Cardiac septum (tissue), 1 donor: ENCODE measurements at regions of chr11 and their contacts with region 1.

Region 1: DNA sequence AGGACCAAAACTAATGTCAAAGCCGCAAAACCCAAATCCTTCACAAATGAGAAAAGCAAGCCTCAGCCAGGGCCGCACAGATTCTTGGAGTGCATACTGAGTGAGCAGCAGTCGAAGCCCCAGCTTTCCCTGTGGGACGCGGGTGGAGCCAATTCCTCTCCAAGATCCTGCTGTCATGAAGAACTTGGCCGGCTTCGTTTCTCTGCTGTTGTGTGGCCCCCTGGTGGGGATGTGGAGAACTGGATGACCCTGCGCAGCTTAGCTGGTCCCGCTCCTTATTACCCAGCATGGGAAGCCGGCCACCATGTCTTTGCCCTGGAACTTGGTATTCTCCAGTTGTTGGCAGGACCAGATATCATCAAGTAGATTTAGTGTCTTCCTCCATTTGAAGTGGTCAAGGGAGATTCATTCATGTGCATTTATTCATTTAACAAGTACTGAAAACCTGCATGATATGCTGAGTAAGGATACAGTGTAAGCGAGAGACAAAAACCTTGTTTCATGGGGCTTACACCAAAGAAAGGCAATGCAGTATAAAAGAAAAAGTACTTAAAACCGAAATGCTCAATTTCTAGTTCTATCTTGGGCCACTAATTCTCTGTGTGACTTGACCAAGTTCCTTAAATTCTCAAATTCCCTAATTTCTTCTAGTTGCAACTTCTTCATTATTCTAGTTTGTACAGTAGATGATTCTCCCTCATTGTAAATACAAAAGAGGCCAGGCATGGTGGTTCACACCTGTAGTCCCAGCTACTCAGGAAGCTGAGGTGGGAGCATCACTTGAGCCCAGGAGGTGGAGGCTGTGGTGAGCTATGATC is 56.7 kb upstream of the CRTAM start:
- DNase-seq: peak; percentile 93

Region 2: DNA sequence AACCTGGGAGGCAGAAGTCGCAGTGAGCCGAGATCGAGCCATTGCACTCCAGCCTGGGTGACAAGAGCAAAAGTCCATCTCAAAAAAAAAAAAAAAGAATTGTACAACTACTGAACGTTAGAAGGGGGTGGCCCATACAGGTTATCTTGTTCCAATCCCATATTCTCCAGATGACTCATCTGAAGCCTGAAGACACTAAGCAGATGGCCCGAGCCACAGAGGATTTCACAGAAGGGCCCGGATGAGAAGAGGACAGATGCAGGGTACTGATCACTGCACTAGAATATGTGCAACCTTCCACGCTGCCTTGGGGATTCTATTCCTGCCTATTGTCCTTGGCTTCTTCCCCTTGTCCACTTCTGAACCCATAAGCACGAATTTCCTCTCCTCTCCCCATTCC is 196.9 kb before region 1 on chr11:
- intact Hi-C with region 1: loop called (anchors 5 kb)
- DNase-seq: no peak

Region 3: DNA sequence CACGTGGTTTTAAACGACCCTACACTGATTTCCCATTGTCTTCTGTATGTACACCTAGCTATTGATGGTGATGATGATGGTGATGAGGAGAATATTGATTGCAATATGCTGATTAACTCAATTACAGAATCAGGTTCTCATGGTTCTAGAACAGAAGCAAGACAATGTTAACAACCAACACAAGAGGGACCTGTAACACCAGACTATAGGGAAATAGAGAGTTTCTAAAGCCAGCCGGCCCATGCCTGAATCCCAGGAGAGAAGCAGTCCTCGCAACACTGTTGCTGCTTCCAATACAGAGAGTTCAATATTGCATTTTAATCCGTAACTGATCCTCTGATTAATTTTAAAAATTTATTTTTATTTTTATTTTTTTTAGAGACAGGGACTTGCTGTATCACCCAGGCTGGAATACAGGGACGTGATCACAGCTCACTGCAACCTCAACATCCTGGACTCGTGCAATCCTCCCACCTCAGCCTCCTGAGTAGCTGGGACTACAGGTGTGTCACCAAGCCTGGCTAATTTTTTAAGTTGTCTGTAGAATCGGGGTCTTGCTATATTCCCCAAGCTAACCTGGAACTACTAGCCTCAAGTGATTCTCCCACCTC is 148.3 kb before region 1 on chr11:
- intact Hi-C with region 1: loop called (anchors 2 kb)
- DNase-seq: peak; percentile 68

Region 4: GRCh38 chr11:122655527-122656072 is 126.0 kb before region 1 on chr11 and contains the start of gene UBASH3B:
- intact Hi-C with region 1: loop called (anchors 1 kb)
- DNase-seq: peak; percentile 92
- total RNA-seq, gene UBASH3B: 4.2 TPM